ENCODE measurements at regions of chr5 and their contacts with region 1.

Region 1: GRCh38 chr5:32805971-32806638 is 95.0 kb downstream of the NPR3 start:
- DNase-seq: no peak
- H3K4me3 ChIP-seq: no peak overlapping the region
- H3K27ac ChIP-seq: peak overlapping the region in 1 of 2 donors; percentile 56
- H3K4me1 ChIP-seq: peaks cover 0 to 43% (median 18%) of the 10 kb centered on the region in 4 donors
- H3K27me3 ChIP-seq: no peaks in the 10 kb centered on the region
- CTCF ChIP-seq: no peak

Region 2: GRCh38 chr5:32613050-32613672 is 192.9 kb before region 1 on chr5:
- intact Hi-C with region 1: no loop called
- DNase-seq: peak; percentile 86 to 87
- H3K4me3 ChIP-seq: no peak overlapping the region
- H3K27ac ChIP-seq: peak overlapping the region in 1 of 2 donors; percentile 16
- H3K4me1 ChIP-seq: peaks cover 0 to 28% (median 10%) of the 10 kb centered on the region in 4 donors
- H3K27me3 ChIP-seq: no peaks in the 10 kb centered on the region
- CTCF ChIP-seq: peak; percentile 86 to 91

Region 3: DNA sequence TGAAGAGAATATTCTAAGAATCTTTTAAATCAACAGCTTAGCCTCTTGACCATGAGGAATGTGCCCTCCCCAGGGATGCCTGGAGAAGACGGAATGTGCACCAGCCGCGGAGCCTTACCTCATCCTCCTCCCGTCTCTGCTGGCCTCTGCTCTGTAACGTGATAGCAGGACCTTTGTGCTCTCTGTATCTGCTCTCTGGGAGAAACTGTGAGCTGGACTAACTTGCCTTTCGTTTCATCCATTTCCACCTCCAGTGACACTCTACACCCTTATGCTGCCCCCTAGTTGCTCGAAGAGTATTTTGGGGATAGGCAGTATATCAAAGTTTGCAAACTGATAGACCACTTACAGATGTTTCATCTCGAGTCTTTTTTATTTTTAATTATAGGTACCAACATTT is 46.4 kb after region 1 on chr5:
- intact Hi-C with region 1: loop called (anchors 5 kb)
- DNase-seq: peak in 1 of 2 donors; percentile 70
- H3K4me3 ChIP-seq: peak overlapping the region in 1 of 2 donors; percentile 7
- H3K27ac ChIP-seq: peak overlapping the region; percentile 47 to 70
- H3K4me1 ChIP-seq: peaks cover 0 to 28% (median 9%) of the 10 kb centered on the region in 4 donors
- H3K27me3 ChIP-seq: no peaks in the 10 kb centered on the region
- CTCF ChIP-seq: peak; percentile 49 to 56